PC-3 (cell line): ENCODE measurements at regions of chr1 and their contacts with region 1.

Region 1: DNA sequence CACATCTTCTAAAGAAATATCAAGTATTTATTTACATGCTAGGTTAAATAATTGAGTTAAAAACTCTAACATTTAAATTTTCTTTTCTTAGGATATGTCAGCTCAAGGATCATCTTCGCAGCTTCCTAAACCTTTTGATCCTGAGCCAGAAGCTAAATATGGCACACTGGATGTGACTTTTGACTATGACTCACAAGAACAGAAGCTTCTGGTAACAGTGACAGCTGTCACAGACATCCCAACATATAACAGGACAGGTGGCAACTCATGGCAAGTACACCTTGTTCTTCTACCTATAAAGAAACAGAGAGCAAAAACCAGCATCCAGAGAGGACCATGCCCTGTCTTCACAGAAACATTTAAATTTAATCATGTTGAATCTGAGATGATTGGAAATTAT is 132.7 kb upstream of the SERTAD4 start:
- DNase-seq: no peak
- ATAC-seq: no peak; the same call in 1 of the 2 replicates
- H3K4me3 ChIP-seq: no peak overlapping the region
- H3K27ac ChIP-seq: no peak overlapping the region
- H3K4me1 ChIP-seq: no peaks in the 10 kb centered on the region
- H3K27me3 ChIP-seq: no peaks in the 10 kb centered on the region
- CTCF ChIP-seq: no peak

Region 2: GRCh38 chr1:208895181-208895580 is 1204.7 kb before region 1 on chr1:
- CTCF ChIA-PET with region 1: no interaction called
- POLR2A ChIA-PET with region 1: interaction called, 20 read pairs
- intact Hi-C with region 1: no loop called
- DNase-seq: no peak
- ATAC-seq: no peak
- H3K4me3 ChIP-seq: no peak overlapping the region
- H3K27ac ChIP-seq: no peak overlapping the region
- H3K4me1 ChIP-seq: no peaks in the 10 kb centered on the region
- H3K27me3 ChIP-seq: no peaks in the 10 kb centered on the region
- CTCF ChIP-seq: no peak